Right ventricle myocardium inferior (tissue), 1 donor: ENCODE measurements at regions of chr2 and their contacts with region 1.

Region 1: GRCh38 chr2:99154643-99155536 is at the starts of genes LIPT1 and TSGA10:
- DNase-seq: peak; percentile 94
- ATAC-seq: peak; percentile 99
- total RNA-seq, gene LIPT1: 7.4 TPM
- total RNA-seq, gene TSGA10: 3.3 TPM

Region 2: DNA sequence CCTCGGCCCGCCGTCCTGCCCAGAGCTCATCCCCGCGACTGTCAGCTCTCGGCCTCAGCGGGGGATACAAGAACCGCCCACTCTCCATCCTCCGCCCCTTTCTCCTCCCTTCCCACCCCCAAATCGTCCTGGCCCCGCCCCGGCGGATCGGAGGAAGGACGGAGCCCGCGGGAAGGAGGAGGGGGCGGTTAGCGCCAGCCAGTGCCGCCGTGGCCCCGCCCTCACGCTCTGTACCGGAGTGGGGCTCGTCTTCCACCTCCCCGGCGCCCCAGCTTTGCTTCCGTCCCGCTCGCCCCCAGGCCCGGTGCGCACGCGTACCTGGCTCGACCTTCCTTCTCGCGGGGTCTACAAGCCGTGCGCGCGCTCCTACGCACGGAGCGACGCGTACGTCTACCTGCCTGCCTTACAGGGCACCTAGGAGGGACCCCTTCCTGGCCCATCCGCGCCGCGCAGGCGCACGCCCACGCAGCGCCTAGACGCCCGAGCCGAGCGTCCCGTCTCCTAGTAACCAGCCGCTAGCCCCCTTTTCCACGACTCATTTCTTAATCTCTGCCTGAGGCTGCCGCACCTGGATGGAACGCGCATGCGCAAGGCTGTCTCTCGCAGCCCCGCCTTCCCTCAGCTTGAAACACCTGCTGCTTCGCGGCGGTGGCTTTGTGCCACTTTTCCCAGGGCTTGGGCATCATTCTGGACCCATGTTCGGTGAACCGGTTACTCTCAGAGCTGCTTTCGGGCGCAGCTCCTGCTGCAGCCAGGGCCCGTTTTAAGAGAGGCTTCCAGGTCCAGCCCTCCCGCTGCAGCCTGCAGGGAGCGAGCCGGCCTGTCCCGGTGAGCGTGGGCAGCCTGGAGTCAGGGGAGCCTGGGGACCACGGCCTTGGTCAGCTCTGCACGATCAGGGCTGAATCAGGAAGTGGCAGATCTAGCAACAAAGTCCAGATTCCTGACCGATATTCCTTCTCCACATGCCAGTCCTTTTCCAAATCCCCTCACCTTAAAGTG is 13.5 kb before region 1 on chr2 and contains the start of gene C2orf15:
- intact Hi-C with region 1: loop called (anchors 2 kb)
- DNase-seq: peak; percentile 97
- ATAC-seq: peak; percentile 99
- total RNA-seq, gene C2orf15: not detected